Naive thymus-derived CD4-positive, alpha-beta T cell (primary cell): ENCODE measurements at regions of chr6 and their contacts with region 1.

Region 1: GRCh38 chr6:157764178-157765033 is 58.6 kb upstream of the SNX9 start:
- DNase-seq: peak; percentile 58 to 96 (median 93)
- ATAC-seq: peak; percentile 87
- H3K4me3 ChIP-seq: peak overlapping the region; percentile 49
- H3K4me3 Mint-ChIP-seq: peak overlapping the region; percentile 71 to 84 (median 78)
- H3K27ac ChIP-seq: peak overlapping the region; percentile 56
- H3K27ac Mint-ChIP-seq: peak overlapping the region; percentile 90 to 99 (median 96)
- H3K4me1 ChIP-seq: peaks cover 27 to 65% of the 10 kb centered on the region in 2 donors
- H3K4me1 Mint-ChIP-seq: peaks cover 43 to 91% (median 75%) of the 10 kb centered on the region in 7 donors
- H3K27me3 ChIP-seq: no peaks in the 10 kb centered on the region
- H3K27me3 Mint-ChIP-seq: peaks cover 0 to 31% (median 0%) of the 10 kb centered on the region in 5 donors

Region 2: GRCh38 chr6:156250593-156250992 is 1513.8 kb before region 1 on chr6:
- CTCF ChIA-PET with region 1: no interaction called
- POLR2A ChIA-PET with region 1: no interaction called
- intact Hi-C with region 1: no loop called
- DNase-seq: no peak
- ATAC-seq: no peak
- H3K4me3 ChIP-seq: no peak overlapping the region
- H3K4me3 Mint-ChIP-seq: peak overlapping the region in 2 of 10 donors; percentile 0 to 1
- H3K27ac ChIP-seq: no peak overlapping the region
- H3K27ac Mint-ChIP-seq: peak overlapping the region in 5 of 9 donors; percentile 1 to 59 (median 19)
- H3K4me1 ChIP-seq: no peaks in the 10 kb centered on the region
- H3K4me1 Mint-ChIP-seq: peaks cover 4 to 28% (median 11%) of the 10 kb centered on the region in 7 donors
- H3K27me3 ChIP-seq: no peaks in the 10 kb centered on the region
- H3K27me3 Mint-ChIP-seq: no peaks in the 10 kb centered on the region

Region 3: GRCh38 chr6:157323255-157323965 is 441.0 kb before region 1 on chr6 and contains the start of gene TMEM242:
- CTCF ChIA-PET with region 1: no interaction called
- POLR2A ChIA-PET with region 1: no interaction called
- intact Hi-C with region 1: loop called (anchors 5 to 10 kb)
- DNase-seq: peak; percentile 68 to 93 (median 81)
- ATAC-seq: peak; percentile 98
- H3K4me3 ChIP-seq: peak within 1 kb of the TSS; percentile 95
- H3K4me3 Mint-ChIP-seq: peak within 1 kb of the TSS; percentile 93 to 99 (median 95)
- H3K27ac ChIP-seq: peak within 1 kb of the TSS; percentile 76
- H3K27ac Mint-ChIP-seq: peak within 1 kb of the TSS; percentile 78 to 93 (median 92)
- H3K4me1 ChIP-seq: peaks cover 8 to 12% of the 10 kb centered on the region in 2 donors
- H3K4me1 Mint-ChIP-seq: peaks cover 10 to 47% (median 24%) of the 10 kb centered on the region in 7 donors
- H3K27me3 ChIP-seq: no peaks in the 10 kb centered on the region
- H3K27me3 Mint-ChIP-seq: peaks cover 0 to 30% (median 10%) of the 10 kb centered on the region in 5 donors
- total RNA-seq, gene TMEM242: 11.6 to 15.6 (median 13.2) TPM

Region 4: GRCh38 chr6:157682931-157683403 is 81.4 kb before region 1 on chr6:
- CTCF ChIA-PET with region 1: no interaction called
- POLR2A ChIA-PET with region 1: no interaction called
- intact Hi-C with region 1: no loop called
- DNase-seq: no peak
- ATAC-seq: no peak
- H3K4me3 ChIP-seq: no peak overlapping the region
- H3K4me3 Mint-ChIP-seq: no peak overlapping the region
- H3K27ac ChIP-seq: no peak overlapping the region
- H3K27ac Mint-ChIP-seq: no peak overlapping the region
- H3K4me1 ChIP-seq: no peaks in the 10 kb centered on the region
- H3K4me1 Mint-ChIP-seq: no peaks in the 10 kb centered on the region
- H3K27me3 ChIP-seq: no peaks in the 10 kb centered on the region
- H3K27me3 Mint-ChIP-seq: peaks cover 0 to 2% (median 0%) of the 10 kb centered on the region in 5 donors

Region 5: GRCh38 chr6:157800420-157801237 is 36.2 kb after region 1 on chr6:
- CTCF ChIA-PET with region 1: interaction called, 3 read pairs
- POLR2A ChIA-PET with region 1: no interaction called
- intact Hi-C with region 1: loop called (anchors 2 kb)
- DNase-seq: peak in 1 of 9 donors; percentile 42
- ATAC-seq: peak; percentile 50
- H3K4me3 ChIP-seq: no peak overlapping the region
- H3K4me3 Mint-ChIP-seq: peak overlapping the region in 1 of 10 donors; percentile 28
- H3K27ac ChIP-seq: no peak overlapping the region
- H3K27ac Mint-ChIP-seq: peak overlapping the region in 3 of 9 donors; percentile 3 to 19 (median 3)
- H3K4me1 ChIP-seq: no peaks in the 10 kb centered on the region
- H3K4me1 Mint-ChIP-seq: peaks cover 9 to 27% (median 17%) of the 10 kb centered on the region in 7 donors
- H3K27me3 ChIP-seq: no peaks in the 10 kb centered on the region
- H3K27me3 Mint-ChIP-seq: peaks cover 0 to 48% (median 0%) of the 10 kb centered on the region in 5 donors

Region 6: DNA sequence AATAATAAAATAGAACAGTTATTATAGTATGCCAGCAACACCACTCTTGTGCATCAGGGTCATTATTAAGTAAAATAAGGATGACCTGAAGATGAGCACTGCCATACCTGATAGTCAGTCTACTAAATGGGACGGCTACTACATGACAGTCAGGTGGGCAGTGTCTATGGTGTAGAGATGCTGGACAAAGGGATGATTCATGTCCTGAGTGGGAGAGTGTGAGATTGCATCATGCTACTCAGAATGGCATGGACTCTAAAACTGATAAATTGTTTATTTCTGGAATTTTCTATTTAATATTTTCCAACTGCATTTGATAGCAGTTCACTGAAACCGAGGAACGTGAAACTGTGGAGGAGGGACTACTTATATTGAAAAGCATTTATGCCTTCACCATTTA is 97.4 kb after region 1 on chr6:
- CTCF ChIA-PET with region 1: no interaction called
- POLR2A ChIA-PET with region 1: no interaction called
- intact Hi-C with region 1: loop called in 1 of 2 experiments (anchors 1 kb)
- DNase-seq: no peak
- ATAC-seq: no peak
- H3K4me3 ChIP-seq: no peak overlapping the region
- H3K4me3 Mint-ChIP-seq: no peak overlapping the region
- H3K27ac ChIP-seq: no peak overlapping the region
- H3K27ac Mint-ChIP-seq: peak overlapping the region in 6 of 9 donors; percentile 17 to 75 (median 59)
- H3K4me1 ChIP-seq: peaks cover 8 to 37% of the 10 kb centered on the region in 2 donors
- H3K4me1 Mint-ChIP-seq: peaks cover 24 to 95% (median 78%) of the 10 kb centered on the region in 7 donors
- H3K27me3 ChIP-seq: peaks cover 0 to 4% of the 10 kb centered on the region in 2 donors
- H3K27me3 Mint-ChIP-seq: peaks cover 0 to 45% (median 0%) of the 10 kb centered on the region in 5 donors

Region 7: DNA sequence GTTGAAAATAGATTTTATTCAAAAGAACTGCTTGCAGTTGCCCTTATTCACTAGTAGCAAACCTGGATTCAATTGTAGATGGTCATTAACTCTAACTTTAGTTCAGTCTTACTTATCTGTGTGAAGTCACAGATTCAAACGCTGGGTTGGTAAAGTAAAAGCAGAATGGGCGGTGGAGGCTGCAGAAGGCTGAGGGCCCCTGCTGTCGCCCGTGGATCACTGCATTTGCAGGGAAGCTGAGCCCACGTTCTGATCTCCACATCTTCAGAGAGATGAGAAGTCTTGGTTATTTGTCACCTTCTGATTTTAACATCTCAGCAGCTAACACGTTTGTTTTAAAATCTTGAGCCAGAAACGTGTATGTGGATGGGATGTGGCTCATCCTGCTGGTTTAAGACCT is 133.8 kb after region 1 on chr6:
- CTCF ChIA-PET with region 1: no interaction called
- POLR2A ChIA-PET with region 1: interaction called, 4 read pairs
- intact Hi-C with region 1: loop called in 1 of 2 experiments (anchors 1 kb)
- DNase-seq: peak in 7 of 9 donors; percentile 39 to 68 (median 48)
- ATAC-seq: peak; percentile 55
- H3K4me3 ChIP-seq: no peak overlapping the region
- H3K4me3 Mint-ChIP-seq: no peak overlapping the region
- H3K27ac ChIP-seq: no peak overlapping the region
- H3K27ac Mint-ChIP-seq: peak overlapping the region in 8 of 9 donors; percentile 6 to 92 (median 50)
- H3K4me1 ChIP-seq: peaks cover 0 to 12% of the 10 kb centered on the region in 2 donors
- H3K4me1 Mint-ChIP-seq: peaks cover 5 to 40% (median 26%) of the 10 kb centered on the region in 7 donors
- H3K27me3 ChIP-seq: no peaks in the 10 kb centered on the region
- H3K27me3 Mint-ChIP-seq: no peaks in the 10 kb centered on the region

Region 8: DNA sequence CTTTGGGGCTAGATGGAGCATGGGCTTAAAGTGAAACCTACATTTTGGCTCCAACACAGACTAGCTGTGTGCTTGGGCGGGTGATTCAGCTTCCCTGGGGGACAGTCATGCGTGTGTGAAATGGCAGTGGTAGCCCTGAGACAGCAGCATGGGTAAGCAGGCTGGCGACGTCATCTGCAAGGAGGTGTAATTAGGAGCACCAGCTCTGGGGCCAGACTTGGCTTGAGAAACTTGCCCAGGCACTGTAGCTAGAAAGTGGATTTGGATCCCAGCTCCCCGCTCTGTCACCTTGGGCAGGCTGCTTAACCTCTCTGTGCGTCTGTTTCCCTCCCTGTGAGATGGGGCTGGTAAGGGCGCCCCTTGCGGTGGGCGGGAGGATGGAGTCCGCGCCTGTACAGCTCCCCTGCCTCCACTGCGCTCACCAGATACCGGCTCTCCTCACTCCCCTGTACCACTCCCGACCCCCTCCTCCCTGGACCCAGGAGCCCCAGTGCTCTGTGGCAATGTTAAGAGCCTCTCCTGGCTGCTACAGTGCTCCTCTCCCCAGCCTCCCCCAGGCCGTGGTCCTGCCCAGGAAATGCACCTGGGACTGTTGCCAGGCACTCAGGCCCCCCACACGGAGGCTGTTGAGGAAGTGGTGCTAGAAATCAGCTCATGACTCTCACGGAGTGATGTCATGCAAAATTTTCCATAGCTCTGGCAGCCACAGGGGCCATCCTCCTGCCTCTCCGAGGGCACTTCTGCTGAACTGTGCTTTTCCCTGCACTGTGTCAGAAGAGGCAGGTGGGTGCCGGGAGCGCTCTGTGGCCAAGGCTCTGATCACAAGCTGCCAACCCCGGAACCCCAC is 261.9 kb after region 1 on chr6:
- CTCF ChIA-PET with region 1: interaction called, 4 read pairs
- POLR2A ChIA-PET with region 1: no interaction called
- intact Hi-C with region 1: loop called (anchors 1 kb)
- DNase-seq: peak; percentile 67 to 94 (median 82)
- ATAC-seq: peak; percentile 84
- H3K4me3 ChIP-seq: peak overlapping the region; percentile 44
- H3K4me3 Mint-ChIP-seq: peak overlapping the region; percentile 79 to 86 (median 84)
- H3K27ac ChIP-seq: peak overlapping the region; percentile 73
- H3K27ac Mint-ChIP-seq: peak overlapping the region; percentile 88 to 98 (median 97)
- H3K4me1 ChIP-seq: peaks cover 22 to 23% of the 10 kb centered on the region in 2 donors
- H3K4me1 Mint-ChIP-seq: peaks cover 20 to 40% (median 35%) of the 10 kb centered on the region in 7 donors
- H3K27me3 ChIP-seq: no peaks in the 10 kb centered on the region
- H3K27me3 Mint-ChIP-seq: no peaks in the 10 kb centered on the region